ENCODE measurements at regions of chr12 and their contacts with region 1.

Region 1: DNA sequence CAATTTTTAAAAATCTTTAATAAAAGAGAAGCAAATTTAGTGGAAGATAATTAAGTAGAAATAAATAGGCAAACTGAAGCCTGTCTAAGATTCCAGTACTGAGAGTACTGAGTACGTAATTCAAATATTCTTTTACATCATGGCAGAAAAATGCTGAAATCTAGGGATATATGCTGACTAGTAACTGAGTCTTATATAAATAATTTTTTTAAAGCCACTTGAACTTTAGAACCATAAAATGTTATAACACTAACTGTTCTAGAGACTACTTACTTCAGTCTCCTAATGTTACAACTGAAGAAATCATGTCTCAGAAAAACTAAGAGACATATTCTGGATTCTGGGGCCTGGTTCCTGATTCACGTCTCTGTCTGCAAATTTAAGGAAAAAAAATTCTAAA is 230.6 kb upstream of the PLEKHG7 start:
- DNase-seq: no peak
- ATAC-seq: no peak
- H3K4me3 Mint-ChIP-seq: peak overlapping the region; percentile 48
- H3K27ac Mint-ChIP-seq: peak overlapping the region; percentile 96
- H3K4me1 Mint-ChIP-seq: peaks cover 90% of the 10 kb centered on the region
- H3K27me3 Mint-ChIP-seq: no peaks in the 10 kb centered on the region
- CTCF ChIP-seq: no peak

Region 2: GRCh38 chr12:92431146-92431545 is 41.1 kb before region 1 on chr12:
- CTCF ChIA-PET with region 1: no interaction called
- POLR2A ChIA-PET with region 1: interaction called, 10 read pairs
- intact Hi-C with region 1: loop called (anchors 1 kb)
- DNase-seq: peak; percentile 27
- ATAC-seq: peak; percentile 60
- H3K4me3 Mint-ChIP-seq: no peak overlapping the region
- H3K27ac Mint-ChIP-seq: peak overlapping the region; percentile 94
- H3K4me1 Mint-ChIP-seq: peaks cover 80% of the 10 kb centered on the region
- H3K27me3 Mint-ChIP-seq: no peaks in the 10 kb centered on the region
- CTCF ChIP-seq: no peak

Region 3: GRCh38 chr12:92485351-92486348 is 13.4 kb after region 1 on chr12:
- CTCF ChIA-PET with region 1: interaction called, 3 read pairs
- POLR2A ChIA-PET with region 1: interaction called, 43 read pairs
- intact Hi-C with region 1: loop called (anchors 1 kb)
- DNase-seq: no peak
- ATAC-seq: peak; percentile 41
- H3K4me3 Mint-ChIP-seq: peak overlapping the region; percentile 50
- H3K27ac Mint-ChIP-seq: peak overlapping the region; percentile 85
- H3K4me1 Mint-ChIP-seq: peaks cover 88% of the 10 kb centered on the region
- H3K27me3 Mint-ChIP-seq: no peaks in the 10 kb centered on the region
- CTCF ChIP-seq: no peak

Measured in activated B cell treated with CpG ODN at 0.5 μM for 24 hours (primary cell).